Endothelial cell of umbilical vein (primary cell): ENCODE measurements at regions of chr11 and their contacts with region 1.

Region 1: DNA sequence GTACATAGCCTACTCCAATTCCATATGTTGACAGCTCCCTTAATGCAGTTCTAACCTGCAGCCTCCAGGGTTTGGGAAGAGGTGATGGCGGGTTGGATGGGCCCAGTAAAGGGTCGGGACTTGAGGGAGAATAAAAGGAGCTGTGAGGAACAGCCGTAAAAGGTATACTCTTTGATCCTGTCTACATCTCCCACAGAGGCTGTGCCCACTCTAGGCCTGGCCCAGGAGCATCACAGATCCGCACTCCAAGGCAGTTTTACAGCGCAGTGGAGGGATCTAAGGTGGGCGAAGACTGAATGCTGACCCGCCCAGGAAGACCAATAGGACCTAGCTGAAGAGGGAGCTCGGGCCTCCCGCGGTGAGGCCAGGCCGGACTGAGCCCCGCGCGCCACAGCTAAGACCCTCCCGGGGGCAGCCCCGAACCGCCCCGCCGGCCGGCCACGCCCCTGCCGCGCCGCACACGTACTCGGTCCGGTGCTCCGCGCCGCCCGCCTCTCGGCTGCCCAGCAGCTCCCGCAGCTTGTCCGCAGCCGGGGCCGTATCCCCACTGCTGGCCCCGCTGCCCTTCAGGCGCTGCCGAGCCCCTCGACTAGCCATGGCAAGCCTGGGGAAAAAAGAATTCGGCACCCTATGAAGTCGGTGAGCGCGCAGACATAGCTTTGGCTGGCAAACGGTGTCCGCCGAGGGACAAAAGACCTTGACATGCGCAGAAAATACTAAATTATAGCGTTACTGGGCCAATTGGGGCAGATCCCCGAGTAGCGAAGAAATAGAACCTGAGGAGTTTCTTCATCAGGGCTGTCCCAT is at the start of gene ALG9:
- DNase-seq: peak; percentile 87
- H3K4me3 ChIP-seq: peak within 1 kb of the TSS; percentile 72 to 93 (median 81)
- H3K27ac ChIP-seq: peak within 1 kb of the TSS; percentile 71
- H3K4me1 ChIP-seq: peaks cover 8% of the 10 kb centered on the region
- H3K27me3 ChIP-seq: no peaks in the 10 kb centered on the region
- CTCF ChIP-seq: peak; percentile 8 to 15
- POLR2A ChIP-seq: peak; percentile 92
- total RNA-seq, gene ALG9: 29.1 and 33.5 TPM in 2 replicates

Region 2: DNA sequence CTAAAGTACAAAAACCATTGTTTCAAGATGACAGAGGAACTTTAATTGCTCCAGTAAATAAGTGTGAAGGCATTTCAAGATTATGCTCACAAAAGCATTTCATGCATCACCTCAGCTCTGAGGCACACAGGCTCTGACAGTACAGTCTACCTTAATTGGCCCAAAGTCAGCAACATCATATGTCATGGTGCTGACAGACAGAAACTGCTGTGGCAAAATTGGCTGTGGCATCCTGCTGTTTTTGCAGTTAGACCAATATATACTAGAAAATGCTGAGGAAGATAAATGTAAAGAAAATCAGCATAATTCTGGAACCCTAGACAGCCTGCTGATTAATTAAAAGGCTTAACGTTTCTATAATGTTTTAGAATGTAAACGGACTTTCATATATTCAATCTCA is 70.0 kb before region 1 on chr11:
- CTCF ChIA-PET with region 1: no interaction called
- POLR2A ChIA-PET with region 1: no interaction called
- dilution Hi-C with region 1: no loop called
- intact Hi-C with region 1: no loop called
- DNase-seq: no peak
- H3K4me3 ChIP-seq: no peak overlapping the region
- H3K27ac ChIP-seq: no peak overlapping the region
- H3K4me1 ChIP-seq: no peaks in the 10 kb centered on the region
- H3K27me3 ChIP-seq: no peaks in the 10 kb centered on the region
- CTCF ChIP-seq: no peak
- POLR2A ChIP-seq: no peak

Region 3: DNA sequence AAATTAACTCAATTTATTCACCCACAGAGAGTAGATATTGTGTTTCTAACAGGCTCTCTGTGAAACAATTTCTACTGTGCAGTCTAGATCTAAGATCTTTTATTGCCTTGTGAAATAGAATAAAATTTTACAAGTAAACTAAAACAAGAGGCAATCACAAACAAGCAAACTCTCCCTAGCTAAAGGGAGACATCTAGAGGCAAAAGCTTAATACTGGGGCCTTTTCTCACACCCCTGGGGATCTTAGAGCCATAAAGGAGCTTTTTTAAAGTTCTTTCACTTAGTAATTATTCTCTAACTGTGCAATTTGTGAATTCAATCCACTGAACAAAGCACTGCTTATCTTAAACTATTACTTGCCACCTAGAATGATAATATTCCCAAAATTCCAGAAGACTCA is 19.5 kb before region 1 on chr11:
- CTCF ChIA-PET with region 1: interaction called, 12 read pairs
- POLR2A ChIA-PET with region 1: interaction called, 3 read pairs
- dilution Hi-C with region 1: no loop called
- intact Hi-C with region 1: no loop called
- DNase-seq: peak; percentile 18
- H3K4me3 ChIP-seq: no peak overlapping the region
- H3K27ac ChIP-seq: no peak overlapping the region
- H3K4me1 ChIP-seq: peaks cover 2% of the 10 kb centered on the region
- H3K27me3 ChIP-seq: no peaks in the 10 kb centered on the region
- CTCF ChIP-seq: peak in 1 of 2 donors; percentile 23
- POLR2A ChIP-seq: no peak

Region 4: GRCh38 chr11:111860257-111860656 is 10.8 kb before region 1 on chr11:
- CTCF ChIA-PET with region 1: interaction called, 12 read pairs
- POLR2A ChIA-PET with region 1: interaction called, 5 read pairs
- dilution Hi-C with region 1: no loop called
- intact Hi-C with region 1: no loop called
- DNase-seq: no peak
- H3K4me3 ChIP-seq: no peak overlapping the region
- H3K27ac ChIP-seq: no peak overlapping the region
- H3K4me1 ChIP-seq: no peaks in the 10 kb centered on the region
- H3K27me3 ChIP-seq: no peaks in the 10 kb centered on the region
- CTCF ChIP-seq: no peak
- POLR2A ChIP-seq: no peak

Region 5: DNA sequence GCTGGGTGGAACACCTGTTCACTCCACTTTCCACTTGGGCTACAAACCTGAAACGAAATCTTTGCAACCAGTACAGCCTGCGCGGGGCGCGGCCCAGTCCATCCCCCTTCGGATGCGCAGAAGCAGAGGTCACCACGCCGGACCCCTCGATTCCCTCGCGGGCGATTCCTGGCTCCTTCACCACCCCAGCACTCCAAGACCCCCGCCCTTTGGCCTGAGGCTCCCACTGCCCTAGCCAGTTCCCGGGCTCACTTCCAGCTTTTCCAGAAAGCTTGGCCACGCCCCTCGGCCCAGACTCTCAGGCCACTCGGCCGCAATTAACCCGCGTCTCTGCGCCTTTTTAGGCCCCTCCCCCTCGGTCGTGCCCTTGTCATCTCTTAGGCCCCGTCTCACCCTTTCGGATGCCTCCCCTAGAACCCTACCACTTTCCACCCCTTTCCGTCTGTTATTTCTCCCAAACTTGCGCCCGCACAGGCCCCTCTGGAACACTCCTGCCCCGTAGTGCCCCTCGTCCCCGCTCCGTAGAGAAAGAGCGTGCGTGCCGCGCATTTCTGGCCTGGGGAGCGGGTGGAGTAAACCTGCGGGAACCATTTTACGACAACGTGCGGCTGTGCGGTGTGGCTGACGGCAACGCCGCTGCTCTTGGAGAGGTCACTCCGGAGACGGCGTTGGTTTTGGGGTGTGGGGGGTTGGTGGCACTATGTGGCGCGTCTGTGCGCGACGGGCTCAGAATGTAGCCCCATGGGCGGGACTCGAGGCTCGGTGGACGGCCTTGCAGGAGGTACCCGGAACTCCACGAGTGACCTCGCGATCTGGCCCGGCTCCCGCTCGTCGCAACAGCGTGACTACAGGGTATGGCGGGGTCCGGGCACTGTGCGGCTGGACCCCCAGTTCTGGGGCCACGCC is 153.9 kb after region 1 on chr11 and contains the start of gene DLAT:
- CTCF ChIA-PET with region 1: no interaction called
- POLR2A ChIA-PET with region 1: no interaction called
- dilution Hi-C with region 1: no loop called
- intact Hi-C with region 1: loop called (anchors 2 kb)
- DNase-seq: peak; percentile 81
- H3K4me3 ChIP-seq: peak within 1 kb of the TSS; percentile 63 to 86 (median 82)
- H3K27ac ChIP-seq: peak within 1 kb of the TSS; percentile 64
- H3K4me1 ChIP-seq: peaks cover 11% of the 10 kb centered on the region
- H3K27me3 ChIP-seq: no peaks in the 10 kb centered on the region
- CTCF ChIP-seq: no peak
- POLR2A ChIP-seq: peak; percentile 63
- total RNA-seq, gene DLAT: 40.1 and 41.3 TPM in 2 replicates

Region 6: DNA sequence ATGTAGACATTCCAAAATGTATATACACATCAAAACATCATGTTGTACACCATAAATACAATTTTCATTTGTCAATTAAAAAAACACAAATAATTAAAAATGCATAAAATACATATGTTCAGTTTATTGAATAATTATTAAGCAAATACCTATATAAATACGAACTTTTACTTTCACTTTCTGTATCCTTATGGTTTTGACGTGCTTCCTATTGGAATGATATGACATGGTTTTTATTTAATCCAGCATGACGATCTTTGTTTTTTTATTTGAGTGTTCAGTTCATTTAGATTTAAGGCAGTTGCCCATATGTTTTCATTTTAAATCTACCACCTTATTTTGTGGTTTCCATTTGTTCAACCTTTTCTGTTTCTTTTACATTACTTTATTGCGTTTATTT is 587.9 kb after region 1 on chr11:
- CTCF ChIA-PET with region 1: no interaction called
- POLR2A ChIA-PET with region 1: no interaction called
- dilution Hi-C with region 1: no loop called
- intact Hi-C with region 1: no loop called
- DNase-seq: peak; percentile 10
- H3K4me3 ChIP-seq: peak overlapping the region in 2 of 3 experiments; percentile 20 to 36
- H3K27ac ChIP-seq: no peak overlapping the region
- H3K4me1 ChIP-seq: no peaks in the 10 kb centered on the region
- H3K27me3 ChIP-seq: no peaks in the 10 kb centered on the region
- CTCF ChIP-seq: no peak
- POLR2A ChIP-seq: no peak